Sciatic nerve (tissue), 2 donors: ENCODE measurements at regions of chr20 and their contacts with region 1.

Region 1: GRCh38 chr20:38550274-38550673 is 30.7 kb upstream of the ADIG start:
- DNase-seq: no peak
- ATAC-seq: no peak

Region 2: GRCh38 chr20:36700438-36700837 is 1849.8 kb before region 1 on chr20:
- intact Hi-C with region 1: loop called (anchors 10 kb)
- DNase-seq: no peak
- ATAC-seq: no peak